Activated B cell treated with CpG ODN at 0.5 μM for 24 hours (primary cell): ENCODE measurements at regions of chr11 and their contacts with region 1.

Region 1: DNA sequence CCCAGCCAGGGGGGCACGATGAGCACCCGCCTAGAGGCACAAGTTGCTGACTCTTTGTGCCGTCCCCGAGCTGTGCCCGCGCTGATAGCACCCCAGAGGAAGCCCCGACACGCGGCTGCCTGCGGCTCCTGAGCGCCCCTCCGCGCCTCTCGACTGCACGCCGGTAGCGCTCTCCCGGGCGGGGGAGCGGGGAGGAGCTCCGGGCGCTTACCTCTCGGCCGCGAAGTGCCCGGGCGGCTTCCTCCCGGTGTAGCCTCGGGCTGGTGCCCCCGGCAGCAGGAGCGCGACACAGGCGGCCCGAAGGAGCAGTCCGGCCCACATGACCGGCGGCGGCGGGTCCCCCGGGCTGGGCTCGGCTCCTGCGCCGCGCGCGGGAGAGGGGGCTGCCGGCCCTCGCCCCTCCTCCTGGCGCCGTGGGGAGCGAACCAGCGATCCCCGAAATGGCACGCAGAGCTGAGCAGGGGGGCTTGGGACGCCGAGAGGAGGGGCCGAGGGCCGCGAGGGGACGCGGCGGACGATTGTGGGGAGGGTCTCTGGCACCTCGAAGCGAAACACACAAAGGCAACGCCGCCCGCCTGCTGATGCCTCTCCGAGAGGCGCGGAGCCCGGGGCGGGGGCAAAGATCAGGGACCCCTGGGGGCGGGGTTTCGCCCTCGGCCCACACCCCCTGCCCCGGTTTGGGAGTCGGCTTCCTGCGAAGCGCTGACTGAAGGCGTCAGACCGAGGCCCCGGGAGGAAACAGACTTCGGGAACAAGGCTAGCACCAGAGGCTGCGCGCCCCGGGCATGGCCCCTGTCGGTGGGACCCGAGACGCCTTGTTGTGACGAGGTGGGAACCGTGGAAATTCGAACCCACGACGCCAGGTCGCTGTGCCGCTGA is at the start of gene VWCE:
- DNase-seq: peak; percentile 67
- ATAC-seq: peak; percentile 86
- H3K4me3 Mint-ChIP-seq: peak within 1 kb of the TSS; percentile 81
- H3K27ac Mint-ChIP-seq: no peak within 1 kb of the TSS
- H3K4me1 Mint-ChIP-seq: peaks cover 9% of the 10 kb centered on the region
- H3K27me3 Mint-ChIP-seq: peaks cover 10% of the 10 kb centered on the region
- CTCF ChIP-seq: no peak
- total RNA-seq, gene VWCE: 0.76 and 1.3 TPM in 2 replicates

Region 2: DNA sequence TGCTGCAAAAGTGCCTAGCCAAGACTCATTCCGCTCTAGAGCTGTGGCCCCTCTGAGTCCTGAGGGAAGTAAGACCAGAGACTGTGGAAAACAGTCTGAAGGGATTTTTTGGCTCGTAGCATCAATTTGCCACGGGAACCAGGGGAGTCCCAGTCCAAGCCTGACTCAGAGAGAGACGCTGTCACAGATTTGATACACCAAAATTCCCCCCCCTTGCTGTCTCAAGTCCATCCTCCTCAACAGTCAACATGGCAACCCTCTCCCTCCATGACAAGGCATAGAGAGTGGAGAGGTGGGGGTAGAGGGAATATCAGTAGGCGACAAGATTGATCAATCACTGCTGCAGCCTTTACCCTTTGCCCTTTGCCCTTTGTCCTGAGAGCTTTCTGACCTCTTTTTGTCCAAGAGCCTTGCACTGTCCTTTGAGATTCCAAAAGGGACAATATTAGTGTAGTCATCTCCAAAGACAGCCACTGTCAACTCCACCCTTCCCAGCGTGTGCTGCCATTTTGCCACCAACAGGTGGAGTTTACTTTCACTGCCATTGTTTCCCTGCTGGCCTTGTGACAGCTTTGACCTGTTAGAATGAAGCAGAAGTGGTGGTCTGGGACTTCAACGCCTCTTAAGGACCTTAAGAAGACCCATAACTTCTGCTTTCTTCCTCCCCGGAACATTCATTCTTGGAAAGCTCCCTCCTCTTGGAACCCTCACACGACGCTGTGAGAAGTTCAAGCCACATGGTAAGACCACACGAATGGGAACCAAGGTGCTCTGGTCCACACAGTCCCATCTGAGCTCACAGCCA is 350.3 kb before region 1 on chr11:
- CTCF ChIA-PET with region 1: no interaction called
- POLR2A ChIA-PET with region 1: no interaction called
- intact Hi-C with region 1: no loop called
- DNase-seq: no peak
- ATAC-seq: peak; percentile 31
- H3K4me3 Mint-ChIP-seq: no peak overlapping the region
- H3K27ac Mint-ChIP-seq: peak overlapping the region; percentile 27
- H3K4me1 Mint-ChIP-seq: peaks cover 66% of the 10 kb centered on the region
- H3K27me3 Mint-ChIP-seq: no peaks in the 10 kb centered on the region
- CTCF ChIP-seq: no peak

Region 3: GRCh38 chr11:61056571-61056970 is 238.4 kb before region 1 on chr11:
- CTCF ChIA-PET with region 1: no interaction called
- POLR2A ChIA-PET with region 1: no interaction called
- intact Hi-C with region 1: no loop called
- DNase-seq: no peak
- ATAC-seq: no peak
- H3K4me3 Mint-ChIP-seq: no peak overlapping the region
- H3K27ac Mint-ChIP-seq: no peak overlapping the region
- H3K4me1 Mint-ChIP-seq: peaks cover 22% of the 10 kb centered on the region
- H3K27me3 Mint-ChIP-seq: no peaks in the 10 kb centered on the region
- CTCF ChIP-seq: no peak

Region 4: DNA sequence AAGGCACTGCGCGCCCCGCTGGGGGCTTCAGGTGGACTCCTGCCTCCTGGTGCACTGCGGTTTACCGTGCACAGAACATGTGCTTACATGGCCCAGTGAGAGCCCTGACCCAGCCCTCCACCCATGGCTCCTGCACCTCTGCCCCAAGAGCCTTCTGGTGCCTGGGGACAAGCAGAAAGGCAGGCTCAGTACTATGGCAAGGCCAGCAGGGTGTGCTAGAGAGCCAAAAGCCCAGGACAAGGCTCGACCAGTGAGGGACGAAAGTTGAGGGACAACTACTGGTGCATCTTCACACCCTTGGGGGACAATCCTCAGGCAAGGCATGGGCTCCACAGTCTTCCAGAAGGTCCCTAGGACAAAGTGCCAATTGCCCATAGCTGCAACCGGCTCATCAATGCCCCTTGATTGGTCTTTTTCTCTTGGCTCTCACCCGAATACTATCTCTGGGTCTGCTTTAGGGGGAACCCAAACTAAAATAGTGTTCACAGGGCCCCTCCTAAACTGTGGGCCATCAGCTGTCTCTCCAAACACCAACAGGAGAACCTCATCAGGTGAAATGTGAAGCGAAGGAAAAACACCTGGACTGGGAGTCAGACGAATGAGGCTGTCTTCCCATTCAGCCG is 40.4 kb before region 1 on chr11:
- CTCF ChIA-PET with region 1: interaction called, 10 read pairs
- POLR2A ChIA-PET with region 1: no interaction called
- intact Hi-C with region 1: no loop called
- DNase-seq: peak; percentile 49
- ATAC-seq: peak; percentile 93
- H3K4me3 Mint-ChIP-seq: no peak overlapping the region
- H3K27ac Mint-ChIP-seq: no peak overlapping the region
- H3K4me1 Mint-ChIP-seq: no peaks in the 10 kb centered on the region
- H3K27me3 Mint-ChIP-seq: no peaks in the 10 kb centered on the region
- CTCF ChIP-seq: no peak

Region 5: DNA sequence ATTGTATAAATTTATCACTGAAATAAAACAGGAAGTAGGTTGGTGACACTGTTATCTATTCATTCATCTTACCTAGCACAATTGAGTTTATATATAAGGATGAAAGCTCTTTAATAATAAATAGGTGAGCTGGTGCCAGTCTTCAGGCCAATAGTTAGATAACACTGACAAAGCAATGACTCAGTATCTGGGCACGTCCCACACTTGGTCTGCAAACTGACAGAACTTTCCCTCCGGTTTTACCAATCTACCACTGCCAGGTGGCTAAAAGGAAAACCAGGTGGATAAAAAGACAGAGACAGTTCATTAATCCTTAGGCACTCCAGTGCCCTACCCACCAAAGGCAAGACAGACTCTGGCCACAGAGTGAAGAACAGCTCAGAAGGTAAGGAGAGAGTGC is 20.3 kb after region 1 on chr11:
- CTCF ChIA-PET with region 1: no interaction called
- POLR2A ChIA-PET with region 1: interaction called, 11 read pairs
- intact Hi-C with region 1: no loop called
- DNase-seq: no peak
- ATAC-seq: no peak
- H3K4me3 Mint-ChIP-seq: no peak overlapping the region
- H3K27ac Mint-ChIP-seq: no peak overlapping the region
- H3K4me1 Mint-ChIP-seq: no peaks in the 10 kb centered on the region
- H3K27me3 Mint-ChIP-seq: no peaks in the 10 kb centered on the region
- CTCF ChIP-seq: no peak

Region 6: GRCh38 chr11:61581030-61581928 is 286.3 kb after region 1 on chr11 and contains the start of gene SYT7:
- CTCF ChIA-PET with region 1: no interaction called
- POLR2A ChIA-PET with region 1: no interaction called
- intact Hi-C with region 1: loop called (anchors 10 kb)
- DNase-seq: peak; percentile 99
- ATAC-seq: peak; percentile 90
- H3K4me3 Mint-ChIP-seq: peak within 1 kb of the TSS; percentile 82
- H3K27ac Mint-ChIP-seq: peak within 1 kb of the TSS; percentile 59
- H3K4me1 Mint-ChIP-seq: peaks cover 14% of the 10 kb centered on the region
- H3K27me3 Mint-ChIP-seq: peaks cover 53% of the 10 kb centered on the region
- CTCF ChIP-seq: no peak
- total RNA-seq, gene SYT7: not detected in 2 replicates

Region 7: GRCh38 chr11:62962391-62962981 is 1667.5 kb after region 1 on chr11:
- CTCF ChIA-PET with region 1: no interaction called
- POLR2A ChIA-PET with region 1: interaction called, 10 read pairs
- intact Hi-C with region 1: no loop called
- DNase-seq: no peak
- ATAC-seq: no peak
- H3K4me3 Mint-ChIP-seq: no peak overlapping the region
- H3K27ac Mint-ChIP-seq: no peak overlapping the region
- H3K4me1 Mint-ChIP-seq: no peaks in the 10 kb centered on the region
- H3K27me3 Mint-ChIP-seq: peaks cover 43% of the 10 kb centered on the region
- CTCF ChIP-seq: no peak